ENCODE measurements at regions of chr5 and their contacts with region 1.

Region 1: DNA sequence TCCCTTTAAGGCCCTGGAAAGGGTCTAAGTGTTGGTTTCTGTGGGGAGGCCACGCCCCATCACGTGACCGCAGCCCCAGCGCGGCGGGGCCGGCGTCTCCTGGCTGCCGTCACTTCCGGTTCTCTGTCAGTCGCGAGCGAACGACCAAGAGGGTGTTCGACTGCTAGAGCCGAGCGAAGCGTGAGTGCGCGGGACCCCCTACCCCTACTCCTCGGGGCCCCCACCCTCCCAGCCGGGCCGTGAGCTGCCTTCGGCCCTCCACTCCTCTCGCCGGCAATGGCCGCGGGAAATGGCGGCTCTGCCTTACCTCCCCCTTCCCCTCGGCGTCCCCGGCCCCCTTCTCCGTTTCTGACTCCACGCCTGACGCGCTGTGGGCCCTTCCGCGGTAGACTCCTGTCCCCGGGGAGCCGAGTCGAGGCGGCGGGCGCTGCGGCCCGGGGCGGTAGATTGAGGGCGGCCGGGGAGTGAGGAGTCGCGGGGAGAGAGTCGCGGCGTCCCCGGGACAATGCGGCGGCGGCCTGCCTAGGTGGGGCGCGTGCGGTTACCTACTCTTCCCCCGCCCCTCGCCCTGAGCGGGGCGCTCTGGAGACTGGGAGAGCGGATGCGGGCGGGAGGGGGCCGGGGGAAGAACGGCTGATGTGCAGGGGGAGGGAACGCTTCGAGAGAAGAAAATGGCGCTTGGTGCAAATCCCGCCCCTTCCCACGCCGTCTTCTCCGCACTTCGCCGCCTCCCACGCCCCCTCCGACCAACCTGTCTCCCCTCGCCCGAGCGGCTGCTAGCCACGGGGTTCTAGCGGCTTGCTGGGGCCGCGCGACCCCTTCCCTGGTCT is at the start of gene SUB1:
- DNase-seq: peak; percentile 89 to 97 (median 95)
- ATAC-seq: peak; percentile 90
- H3K4me3 ChIP-seq: peak within 1 kb of the TSS; percentile 94 to 97
- H3K4me3 Mint-ChIP-seq: peak within 1 kb of the TSS; percentile 96
- H3K27ac ChIP-seq: peak within 1 kb of the TSS; percentile 100
- H3K27ac Mint-ChIP-seq: peak within 1 kb of the TSS; percentile 95
- H3K4me1 ChIP-seq: peaks cover 29% of the 10 kb centered on the region
- H3K4me1 Mint-ChIP-seq: peaks cover 54% of the 10 kb centered on the region
- H3K27me3 ChIP-seq: no peaks in the 10 kb centered on the region
- H3K27me3 Mint-ChIP-seq: no peaks in the 10 kb centered on the region
- CTCF ChIP-seq: no peak
- total RNA-seq, gene SUB1: 361 to 370 TPM

Region 2: GRCh38 chr5:31366941-31367340 is 1218.7 kb before region 1 on chr5:
- CTCF ChIA-PET with region 1: no interaction called
- POLR2A ChIA-PET with region 1: no interaction called
- intact Hi-C with region 1: no loop called
- DNase-seq: no peak
- ATAC-seq: no peak
- H3K4me3 ChIP-seq: no peak overlapping the region
- H3K4me3 Mint-ChIP-seq: no peak overlapping the region
- H3K27ac ChIP-seq: no peak overlapping the region
- H3K27ac Mint-ChIP-seq: no peak overlapping the region
- H3K4me1 ChIP-seq: no peaks in the 10 kb centered on the region
- H3K4me1 Mint-ChIP-seq: no peaks in the 10 kb centered on the region
- H3K27me3 ChIP-seq: no peaks in the 10 kb centered on the region
- H3K27me3 Mint-ChIP-seq: peaks cover 13% of the 10 kb centered on the region
- CTCF ChIP-seq: no peak

Region 3: GRCh38 chr5:32174011-32174870 is 411.4 kb before region 1 on chr5 and contains the start of gene GOLPH3:
- CTCF ChIA-PET with region 1: no interaction called
- POLR2A ChIA-PET with region 1: interaction called, 4 read pairs
- intact Hi-C with region 1: loop called (anchors 2 to 5 kb)
- DNase-seq: peak; percentile 79 to 94 (median 92)
- ATAC-seq: peak; percentile 86
- H3K4me3 ChIP-seq: peak within 1 kb of the TSS; percentile 91 to 94
- H3K4me3 Mint-ChIP-seq: peak within 1 kb of the TSS; percentile 97
- H3K27ac ChIP-seq: peak within 1 kb of the TSS; percentile 95 to 97
- H3K27ac Mint-ChIP-seq: peak within 1 kb of the TSS; percentile 98
- H3K4me1 ChIP-seq: peaks cover 20% of the 10 kb centered on the region
- H3K4me1 Mint-ChIP-seq: peaks cover 37% of the 10 kb centered on the region
- H3K27me3 ChIP-seq: no peaks in the 10 kb centered on the region
- H3K27me3 Mint-ChIP-seq: peaks cover 4% of the 10 kb centered on the region
- CTCF ChIP-seq: no peak
- total RNA-seq, gene GOLPH3: 48.3 to 51.2 TPM

Region 4: GRCh38 chr5:32312647-32313523 is 272.8 kb before region 1 on chr5 and contains the start of gene MTMR12:
- CTCF ChIA-PET with region 1: interaction called, 4 read pairs
- POLR2A ChIA-PET with region 1: no interaction called
- intact Hi-C with region 1: loop called (anchors 1 kb)
- DNase-seq: peak; percentile 99 to 100 (median 100)
- ATAC-seq: peak; percentile 89
- H3K4me3 ChIP-seq: peak within 1 kb of the TSS; percentile 69 to 83
- H3K4me3 Mint-ChIP-seq: peak within 1 kb of the TSS; percentile 89
- H3K27ac ChIP-seq: peak within 1 kb of the TSS; percentile 87 to 89
- H3K27ac Mint-ChIP-seq: peak within 1 kb of the TSS; percentile 93
- H3K4me1 ChIP-seq: peaks cover 22% of the 10 kb centered on the region
- H3K4me1 Mint-ChIP-seq: peaks cover 39% of the 10 kb centered on the region
- H3K27me3 ChIP-seq: no peaks in the 10 kb centered on the region
- H3K27me3 Mint-ChIP-seq: no peaks in the 10 kb centered on the region
- CTCF ChIP-seq: no peak
- total RNA-seq, gene MTMR12: 20.0 to 21.2 TPM

Region 5: GRCh38 chr5:32489791-32490582 is 95.7 kb before region 1 on chr5:
- CTCF ChIA-PET with region 1: interaction called, 193 read pairs
- POLR2A ChIA-PET with region 1: interaction called, 5 read pairs
- intact Hi-C with region 1: loop called (anchors 1 kb)
- DNase-seq: peak; percentile 41 to 80 (median 73)
- ATAC-seq: no peak
- H3K4me3 ChIP-seq: no peak overlapping the region
- H3K4me3 Mint-ChIP-seq: no peak overlapping the region
- H3K27ac ChIP-seq: no peak overlapping the region
- H3K27ac Mint-ChIP-seq: no peak overlapping the region
- H3K4me1 ChIP-seq: no peaks in the 10 kb centered on the region
- H3K4me1 Mint-ChIP-seq: no peaks in the 10 kb centered on the region
- H3K27me3 ChIP-seq: no peaks in the 10 kb centered on the region
- H3K27me3 Mint-ChIP-seq: no peaks in the 10 kb centered on the region
- CTCF ChIP-seq: peak; percentile 71

Region 6: GRCh38 chr5:32531885-32532520 is 53.7 kb before region 1 on chr5:
- CTCF ChIA-PET with region 1: interaction called, 8 read pairs
- POLR2A ChIA-PET with region 1: interaction called, 3 read pairs
- intact Hi-C with region 1: loop called in 1 of 2 experiments (anchors 5 kb)
- DNase-seq: peak in 7 of 9 experiments; percentile 10 to 87 (median 46)
- ATAC-seq: peak; percentile 71
- H3K4me3 ChIP-seq: peak overlapping the region; percentile 41 to 56
- H3K4me3 Mint-ChIP-seq: peak overlapping the region; percentile 82
- H3K27ac ChIP-seq: peak overlapping the region; percentile 48 to 88
- H3K27ac Mint-ChIP-seq: peak overlapping the region; percentile 84
- H3K4me1 ChIP-seq: peaks cover 4% of the 10 kb centered on the region
- H3K4me1 Mint-ChIP-seq: peaks cover 28% of the 10 kb centered on the region
- H3K27me3 ChIP-seq: no peaks in the 10 kb centered on the region
- H3K27me3 Mint-ChIP-seq: no peaks in the 10 kb centered on the region
- CTCF ChIP-seq: no peak

Region 7: DNA sequence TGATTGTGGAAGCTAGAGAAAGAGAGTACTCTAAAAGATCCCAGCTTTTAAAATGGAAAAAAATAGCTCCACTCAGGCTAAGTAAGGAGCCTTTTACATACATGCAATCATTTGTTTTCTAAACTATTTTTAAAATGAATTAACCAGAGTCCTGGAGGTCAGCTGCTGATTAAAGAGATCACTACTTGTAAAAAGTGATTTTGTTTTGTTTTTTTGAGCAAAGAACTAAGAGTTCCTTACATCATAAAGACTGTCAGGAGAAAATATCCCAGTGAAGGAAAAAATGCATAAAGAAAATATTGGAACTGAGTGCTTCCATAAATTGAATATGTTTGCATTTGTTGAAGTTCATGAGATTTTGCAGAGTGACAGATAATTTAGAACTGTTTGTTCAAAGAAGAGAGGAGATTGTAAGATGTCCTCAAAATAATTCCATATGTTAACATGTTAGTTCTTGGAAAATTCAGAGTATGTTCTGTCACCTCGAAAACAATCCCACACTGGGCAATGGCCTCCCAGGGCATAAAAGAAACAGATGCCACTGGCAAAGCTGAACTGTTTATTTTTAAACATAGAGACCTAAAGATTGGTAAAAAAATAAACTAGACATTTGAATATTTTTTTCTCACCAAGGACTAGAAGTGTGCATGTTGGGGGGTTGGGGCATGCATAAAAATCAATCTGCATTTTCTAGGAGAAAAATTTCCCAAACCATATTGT is 390.2 kb after region 1 on chr5:
- CTCF ChIA-PET with region 1: no interaction called
- POLR2A ChIA-PET with region 1: no interaction called
- intact Hi-C with region 1: no loop called
- DNase-seq: no peak
- ATAC-seq: no peak
- H3K4me3 ChIP-seq: no peak overlapping the region
- H3K4me3 Mint-ChIP-seq: no peak overlapping the region
- H3K27ac ChIP-seq: no peak overlapping the region
- H3K27ac Mint-ChIP-seq: no peak overlapping the region
- H3K4me1 ChIP-seq: no peaks in the 10 kb centered on the region
- H3K4me1 Mint-ChIP-seq: no peaks in the 10 kb centered on the region
- H3K27me3 ChIP-seq: no peaks in the 10 kb centered on the region
- H3K27me3 Mint-ChIP-seq: peaks cover 4% of the 10 kb centered on the region
- CTCF ChIP-seq: no peak